Esophagus muscularis mucosa (tissue), 4 donors: ENCODE measurements at regions of chr15 and their contacts with region 1.

Region 1: GRCh38 chr15:90091156-90091931 is 10.9 kb downstream of the IDH2 start:
- DNase-seq: no peak
- H3K4me3 ChIP-seq: no peak overlapping the region
- H3K27ac ChIP-seq: peak overlapping the region in 3 of 4 donors; percentile 12 to 33 (median 24)
- H3K4me1 ChIP-seq: peaks cover 10 to 61% (median 39%) of the 10 kb centered on the region in 4 donors
- H3K27me3 ChIP-seq: no peaks in the 10 kb centered on the region
- CTCF ChIP-seq: no peak
- EP300 ChIP-seq: no peak
- POLR2A ChIP-seq: no peak

Region 2: GRCh38 chr15:89912674-89913396 is 178.5 kb before region 1 on chr15 and contains the start of gene ARPIN:
- intact Hi-C with region 1: loop called (anchors 5 kb)
- DNase-seq: no peak
- H3K4me3 ChIP-seq: peak within 1 kb of the TSS; percentile 87 to 98 (median 92)
- H3K27ac ChIP-seq: peak within 1 kb of the TSS; percentile 81 to 88 (median 86)
- H3K4me1 ChIP-seq: peaks cover 13 to 27% (median 25%) of the 10 kb centered on the region in 4 donors
- H3K27me3 ChIP-seq: no peaks in the 10 kb centered on the region
- CTCF ChIP-seq: peak in 1 of 3 experiments; percentile 8
- EP300 ChIP-seq: no peak
- POLR2A ChIP-seq: no peak
- total RNA-seq, gene ARPIN: 19.9 to 26.6 (median 25.4) TPM

Region 3: GRCh38 chr15:89972085-89972484 is 119.3 kb before region 1 on chr15:
- intact Hi-C with region 1: no loop called
- DNase-seq: no peak
- H3K4me3 ChIP-seq: no peak overlapping the region
- H3K27ac ChIP-seq: no peak overlapping the region
- H3K4me1 ChIP-seq: peaks cover 0 to 20% (median 0%) of the 10 kb centered on the region in 4 donors
- H3K27me3 ChIP-seq: no peaks in the 10 kb centered on the region
- CTCF ChIP-seq: no peak
- EP300 ChIP-seq: no peak
- POLR2A ChIP-seq: no peak

Region 4: DNA sequence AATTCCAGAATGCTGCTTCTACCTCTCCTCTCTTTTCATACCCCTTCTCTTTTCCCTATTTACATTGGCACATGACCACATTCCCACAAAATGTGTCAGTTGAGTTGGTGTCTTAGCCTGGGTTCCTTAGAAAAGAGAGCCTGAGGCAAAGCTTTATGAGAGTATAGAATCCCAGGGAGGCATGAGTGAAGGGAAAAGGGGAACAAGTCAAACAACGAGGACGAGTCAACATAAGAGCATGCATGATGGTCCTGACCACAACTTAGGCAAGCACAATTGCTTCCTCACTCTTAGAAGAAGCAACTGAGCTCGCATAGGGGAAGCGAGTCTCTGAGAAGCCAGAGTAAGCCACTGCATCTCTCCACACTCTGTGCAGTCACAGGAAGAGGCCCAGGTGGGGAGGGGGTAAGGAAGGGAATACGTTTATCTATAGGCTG is 245.4 kb after region 1 on chr15:
- intact Hi-C with region 1: no loop called
- DNase-seq: no peak
- H3K4me3 ChIP-seq: no peak overlapping the region
- H3K27ac ChIP-seq: no peak overlapping the region
- H3K4me1 ChIP-seq: no peaks in the 10 kb centered on the region
- H3K27me3 ChIP-seq: no peaks in the 10 kb centered on the region
- CTCF ChIP-seq: no peak
- EP300 ChIP-seq: no peak
- POLR2A ChIP-seq: no peak